CD14-positive monocyte (primary cell): ENCODE measurements at regions of chr12 and their contacts with region 1.

Region 1: GRCh38 chr12:56565510-56566101 is 44.0 kb downstream of the RBMS2 start:
- DNase-seq: peak in 1 of 3 donors; percentile 16
- H3K4me3 ChIP-seq: peak overlapping the region in 1 of 3 experiments; percentile 40
- H3K4me3 Mint-ChIP-seq: peak overlapping the region; percentile 58 to 84
- H3K27ac ChIP-seq: peak overlapping the region in 1 of 2 donors; percentile 35
- H3K27ac Mint-ChIP-seq: peak overlapping the region; percentile 18 to 82 (median 70)
- H3K4me1 ChIP-seq: peaks cover 54 to 56% of the 10 kb centered on the region in 2 donors
- H3K4me1 Mint-ChIP-seq: peaks cover 55% of the 10 kb centered on the region
- H3K27me3 ChIP-seq: no peaks in the 10 kb centered on the region
- H3K27me3 Mint-ChIP-seq: peaks cover 0 to 1% (median 0%) of the 10 kb centered on the region in 3 donors
- CTCF ChIP-seq: no peak

Region 2: GRCh38 chr12:56143870-56144269 is 421.7 kb before region 1 on chr12:
- intact Hi-C with region 1: no loop called
- DNase-seq: no peak
- H3K4me3 ChIP-seq: peak overlapping the region in 1 of 3 experiments; percentile 23
- H3K4me3 Mint-ChIP-seq: peak overlapping the region; percentile 27 to 35
- H3K27ac ChIP-seq: peak overlapping the region; percentile 46 to 60
- H3K27ac Mint-ChIP-seq: peak overlapping the region in 6 of 7 donors; percentile 52 to 87 (median 84)
- H3K4me1 ChIP-seq: peaks cover 29 to 30% of the 10 kb centered on the region in 2 donors
- H3K4me1 Mint-ChIP-seq: peaks cover 29% of the 10 kb centered on the region
- H3K27me3 ChIP-seq: no peaks in the 10 kb centered on the region
- H3K27me3 Mint-ChIP-seq: peaks cover 0 to 2% (median 0%) of the 10 kb centered on the region in 3 donors
- CTCF ChIP-seq: no peak

Region 3: DNA sequence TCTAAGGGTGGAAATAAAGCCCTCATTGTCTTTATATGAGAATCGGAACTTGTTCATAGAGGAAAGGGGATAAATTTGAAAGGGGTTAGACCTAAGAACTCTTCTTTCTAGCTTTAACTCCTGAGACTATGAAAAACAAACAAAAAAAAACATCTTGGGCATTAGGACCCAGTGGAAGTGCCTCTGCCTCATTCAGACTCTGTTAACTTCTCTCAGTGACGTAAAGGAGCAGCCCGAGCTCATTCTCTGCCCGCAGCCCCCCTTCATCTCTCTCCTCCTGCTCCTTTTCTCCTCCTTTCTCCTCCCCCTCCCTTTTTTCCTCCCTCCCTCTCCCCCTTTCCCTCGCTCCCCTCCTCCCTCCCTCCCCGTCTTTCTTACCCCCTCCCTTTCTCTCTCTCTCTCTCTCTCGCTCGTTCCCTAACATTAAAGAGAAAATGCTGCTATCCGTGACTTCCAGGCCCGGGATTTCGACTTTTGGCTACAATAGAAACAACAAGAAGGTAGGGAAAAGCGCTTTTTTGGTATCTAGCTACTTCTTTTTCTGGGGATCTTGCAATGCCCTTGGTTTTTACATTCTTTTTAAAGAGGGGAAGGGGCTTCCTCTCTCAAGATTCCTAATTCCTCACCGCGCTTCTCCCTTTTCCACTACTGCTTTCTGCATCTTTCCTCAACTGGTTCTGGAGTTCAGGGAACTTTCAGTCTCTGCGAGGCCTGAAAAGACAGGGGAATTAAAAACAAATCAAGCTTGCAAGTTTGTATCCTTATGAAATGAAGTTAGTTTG is 43.8 kb before region 1 on chr12 and contains the start of gene RBMS2:
- intact Hi-C with region 1: loop called in 1 of 2 experiments (anchors 5 kb)
- DNase-seq: peak; percentile 36 to 42 (median 37)
- H3K4me3 ChIP-seq: peak within 1 kb of the TSS; percentile 68 to 97 (median 84)
- H3K4me3 Mint-ChIP-seq: peak within 1 kb of the TSS; percentile 78 to 93
- H3K27ac ChIP-seq: peak within 1 kb of the TSS; percentile 35 to 84
- H3K27ac Mint-ChIP-seq: peak within 1 kb of the TSS; percentile 84 to 97 (median 92)
- H3K4me1 ChIP-seq: peaks cover 50 to 54% of the 10 kb centered on the region in 2 donors
- H3K4me1 Mint-ChIP-seq: peaks cover 54% of the 10 kb centered on the region
- H3K27me3 ChIP-seq: no peaks in the 10 kb centered on the region
- H3K27me3 Mint-ChIP-seq: no peaks in the 10 kb centered on the region
- CTCF ChIP-seq: no peak
- polyA plus RNA-seq, gene RBMS2: 5.1 to 8.2 (median 6.5) TPM